Common myeloid progenitor, CD34-positive (primary cell): ENCODE measurements at regions of chr5 and their contacts with region 1.

Region 1: GRCh38 chr5:132369474-132370180 is at the start of gene SLC22A5:
- DNase-seq: peak; percentile 59 to 86 (median 71)
- H3K4me3 ChIP-seq: peak within 1 kb of the TSS; percentile 56 to 87 (median 74)
- H3K27ac ChIP-seq: peak within 1 kb of the TSS; percentile 26 to 81
- H3K4me1 ChIP-seq: peaks cover 0 to 32% (median 17%) of the 10 kb centered on the region in 4 experiments
- H3K27me3 ChIP-seq: peaks cover 0 to 2% (median 0%) of the 10 kb centered on the region in 5 experiments

Region 2: DNA sequence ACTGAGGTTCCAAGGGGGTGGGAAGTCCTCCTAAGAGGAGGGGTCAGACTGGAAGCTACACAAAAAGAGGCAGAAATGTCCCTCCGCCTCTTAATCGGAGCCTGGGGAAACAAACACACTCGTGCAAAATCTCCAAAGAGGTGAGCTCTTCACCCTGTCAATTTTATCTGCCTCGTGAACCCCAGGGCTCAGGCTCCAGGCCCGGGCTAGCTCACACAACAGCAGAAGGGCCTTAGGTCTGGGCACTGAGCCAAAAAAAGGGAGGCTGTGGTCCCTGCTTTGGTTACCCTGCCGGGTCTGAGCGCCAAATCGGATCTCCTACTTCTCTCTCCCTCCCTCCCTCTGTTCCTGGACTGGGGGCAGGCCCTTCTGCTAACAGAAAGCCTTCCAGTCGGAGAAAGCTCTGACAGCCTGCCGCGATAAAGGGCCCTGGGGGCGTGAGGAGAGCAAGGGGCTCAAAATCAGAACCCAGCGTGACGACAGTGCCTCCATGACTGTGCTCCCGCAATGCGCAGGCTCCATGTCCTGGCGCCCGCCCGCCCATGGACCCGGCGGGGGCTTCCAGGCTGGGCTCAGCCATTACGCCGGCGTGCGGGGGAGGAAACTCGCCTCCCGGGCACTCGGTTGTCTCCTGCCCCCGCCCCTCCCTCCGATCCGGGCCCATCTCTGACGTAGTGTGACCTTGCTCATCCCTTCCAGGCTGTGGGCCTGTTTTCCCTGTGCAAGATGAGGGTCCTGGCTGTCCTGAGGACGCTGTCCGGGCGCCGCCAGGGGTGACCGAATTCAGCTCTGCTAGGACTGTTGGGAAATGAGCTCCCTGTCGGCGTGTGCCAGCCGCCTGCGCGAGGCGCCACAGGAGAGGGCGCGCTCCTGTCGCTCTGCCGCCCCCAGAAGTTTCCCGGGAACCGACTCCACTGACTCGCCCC is 76.3 kb before region 1 on chr5:
- CTCF ChIA-PET with region 1: interaction called, 5 read pairs
- POLR2A ChIA-PET with region 1: interaction called, 14 read pairs
- DNase-seq: peak; percentile 84 to 93 (median 93)
- H3K4me3 ChIP-seq: peak overlapping the region; percentile 24 to 88 (median 68)
- H3K27ac ChIP-seq: peak overlapping the region; percentile 53 to 78
- H3K4me1 ChIP-seq: peaks cover 14 to 43% (median 36%) of the 10 kb centered on the region in 4 experiments
- H3K27me3 ChIP-seq: peaks cover 0 to 2% (median 0%) of the 10 kb centered on the region in 5 experiments

Region 3: DNA sequence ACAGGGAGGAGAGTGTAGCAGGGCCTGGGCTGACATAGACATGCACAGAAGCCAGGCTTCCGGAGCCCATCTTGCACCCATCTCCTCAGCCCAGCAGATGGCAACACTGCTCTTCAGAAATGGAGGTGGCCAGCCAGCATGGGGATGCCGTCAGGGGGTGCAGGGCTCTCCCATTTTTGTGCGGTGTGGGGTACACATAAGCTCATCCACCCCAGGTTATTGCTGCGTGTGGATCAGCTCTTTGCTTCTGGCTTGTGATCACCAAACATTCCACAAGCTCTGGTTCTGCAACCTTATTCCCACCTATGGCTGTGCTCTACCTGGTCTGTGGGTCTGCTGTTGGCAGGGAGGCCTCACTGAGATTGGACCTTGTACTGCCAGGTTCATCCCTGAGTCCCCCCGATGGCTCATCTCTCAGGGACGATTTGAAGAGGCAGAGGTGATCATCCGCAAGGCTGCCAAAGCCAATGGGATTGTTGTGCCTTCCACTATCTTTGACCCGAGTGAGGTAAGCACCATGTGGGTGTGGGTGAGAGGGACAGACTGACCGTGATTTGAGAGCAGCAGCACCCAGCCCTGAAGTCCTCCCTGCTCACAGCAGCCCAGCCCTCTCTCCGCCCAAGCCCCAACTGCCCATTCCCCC is 17.1 kb after region 1 on chr5:
- CTCF ChIA-PET with region 1: interaction called, 11 read pairs
- POLR2A ChIA-PET with region 1: no interaction called
- DNase-seq: peak; percentile 74 to 89 (median 87)
- H3K4me3 ChIP-seq: no peak overlapping the region
- H3K27ac ChIP-seq: no peak overlapping the region
- H3K4me1 ChIP-seq: peaks cover 0 to 50% (median 31%) of the 10 kb centered on the region in 4 experiments
- H3K27me3 ChIP-seq: no peaks in the 10 kb centered on the region